ENCODE measurements at regions of chr11 and their contacts with region 1.

Region 1: GRCh38 chr11:85854557-85855340 is 434 bp upstream of the CCDC83 start:
- DNase-seq: peak; percentile 95
- H3K4me3 Mint-ChIP-seq: peak overlapping the region; percentile 86
- H3K27ac Mint-ChIP-seq: peak overlapping the region; percentile 89
- H3K4me1 Mint-ChIP-seq: peaks cover 15% of the 10 kb centered on the region
- H3K27me3 Mint-ChIP-seq: no peaks in the 10 kb centered on the region

Region 2: GRCh38 chr11:85647604-85648299 is 207.0 kb before region 1 on chr11 and contains the start of gene TMEM126A:
- CTCF ChIA-PET with region 1: interaction called, 6 read pairs
- POLR2A ChIA-PET with region 1: interaction called, 13 read pairs
- DNase-seq: peak; percentile 93
- H3K4me3 Mint-ChIP-seq: peak within 1 kb of the TSS; percentile 92
- H3K27ac Mint-ChIP-seq: peak within 1 kb of the TSS; percentile 91
- H3K4me1 Mint-ChIP-seq: peaks cover 36% of the 10 kb centered on the region
- H3K27me3 Mint-ChIP-seq: peaks cover 16% of the 10 kb centered on the region
- total RNA-seq, gene TMEM126A: 31.8 to 35.6 TPM

Region 3: GRCh38 chr11:85694386-85694980 is 160.3 kb before region 1 on chr11:
- CTCF ChIA-PET with region 1: interaction called, 16 read pairs
- POLR2A ChIA-PET with region 1: interaction called, 12 read pairs
- DNase-seq: no peak
- H3K4me3 Mint-ChIP-seq: no peak overlapping the region
- H3K27ac Mint-ChIP-seq: no peak overlapping the region
- H3K4me1 Mint-ChIP-seq: peaks cover 48% of the 10 kb centered on the region
- H3K27me3 Mint-ChIP-seq: no peaks in the 10 kb centered on the region

Region 4: DNA sequence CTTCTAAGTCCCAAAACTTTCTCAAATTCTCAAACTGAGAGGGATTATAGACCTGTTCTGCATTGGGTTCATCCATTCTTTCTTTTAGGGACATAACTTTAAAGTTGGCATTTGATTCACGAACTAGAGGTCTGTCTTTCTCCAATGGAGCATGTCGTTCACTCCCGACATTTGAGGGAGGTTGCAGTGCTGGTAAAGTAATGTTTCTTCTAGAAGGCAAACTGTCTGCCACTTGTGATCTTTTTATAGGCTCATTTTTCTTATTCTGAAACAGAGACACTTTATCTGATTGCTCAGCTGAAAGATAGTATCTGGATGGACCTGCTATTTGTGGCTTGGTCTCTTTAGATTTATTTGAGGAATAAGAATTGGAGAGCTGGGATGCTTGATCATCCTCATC is 128.4 kb before region 1 on chr11:
- CTCF ChIA-PET with region 1: no interaction called
- POLR2A ChIA-PET with region 1: no interaction called
- DNase-seq: no peak
- H3K4me3 Mint-ChIP-seq: no peak overlapping the region
- H3K27ac Mint-ChIP-seq: no peak overlapping the region
- H3K4me1 Mint-ChIP-seq: no peaks in the 10 kb centered on the region
- H3K27me3 Mint-ChIP-seq: no peaks in the 10 kb centered on the region

Region 5: DNA sequence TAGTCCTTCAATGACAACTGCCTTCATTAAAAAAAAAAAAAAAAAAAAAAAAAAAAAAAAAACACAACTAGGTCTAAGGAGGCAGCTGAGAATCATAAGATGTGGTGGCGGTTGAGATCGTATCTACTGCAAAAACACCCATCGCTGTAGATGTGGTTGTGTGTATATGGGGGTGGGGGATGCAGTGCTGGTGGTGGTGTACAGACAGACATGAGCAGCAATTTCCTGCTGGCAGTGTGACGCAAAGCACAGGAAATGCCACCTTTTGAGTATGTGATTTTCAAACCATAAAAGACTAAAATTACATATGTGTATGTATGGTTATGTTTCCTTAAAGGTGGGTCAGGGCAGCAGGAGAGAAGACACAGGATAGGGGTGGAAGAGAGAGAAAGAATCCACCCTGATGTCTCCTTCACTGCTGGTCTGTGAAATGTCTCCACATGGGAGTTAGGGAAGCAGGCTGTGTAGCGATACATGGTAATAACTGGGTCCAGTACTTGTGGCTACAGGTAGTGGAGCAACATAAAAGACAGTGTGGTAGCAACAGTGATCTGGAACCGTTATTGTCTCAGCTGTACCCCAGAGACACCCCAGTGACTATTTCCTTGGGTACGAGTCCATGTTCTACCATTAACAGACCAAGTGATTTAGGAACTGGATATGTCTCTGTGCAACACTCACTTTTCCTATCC is 101.7 kb before region 1 on chr11:
- CTCF ChIA-PET with region 1: interaction called, 13 read pairs
- POLR2A ChIA-PET with region 1: interaction called, 9 read pairs
- DNase-seq: peak; percentile 94
- H3K4me3 Mint-ChIP-seq: peak overlapping the region; percentile 58
- H3K27ac Mint-ChIP-seq: peak overlapping the region; percentile 94
- H3K4me1 Mint-ChIP-seq: peaks cover 96% of the 10 kb centered on the region
- H3K27me3 Mint-ChIP-seq: no peaks in the 10 kb centered on the region

Region 6: GRCh38 chr11:85826116-85826855 is 28.5 kb before region 1 on chr11:
- CTCF ChIA-PET with region 1: interaction called, 20 read pairs
- POLR2A ChIA-PET with region 1: interaction called, 9 read pairs
- DNase-seq: peak; percentile 31
- H3K4me3 Mint-ChIP-seq: no peak overlapping the region
- H3K27ac Mint-ChIP-seq: peak overlapping the region; percentile 41
- H3K4me1 Mint-ChIP-seq: peaks cover 72% of the 10 kb centered on the region
- H3K27me3 Mint-ChIP-seq: no peaks in the 10 kb centered on the region

Region 7: DNA sequence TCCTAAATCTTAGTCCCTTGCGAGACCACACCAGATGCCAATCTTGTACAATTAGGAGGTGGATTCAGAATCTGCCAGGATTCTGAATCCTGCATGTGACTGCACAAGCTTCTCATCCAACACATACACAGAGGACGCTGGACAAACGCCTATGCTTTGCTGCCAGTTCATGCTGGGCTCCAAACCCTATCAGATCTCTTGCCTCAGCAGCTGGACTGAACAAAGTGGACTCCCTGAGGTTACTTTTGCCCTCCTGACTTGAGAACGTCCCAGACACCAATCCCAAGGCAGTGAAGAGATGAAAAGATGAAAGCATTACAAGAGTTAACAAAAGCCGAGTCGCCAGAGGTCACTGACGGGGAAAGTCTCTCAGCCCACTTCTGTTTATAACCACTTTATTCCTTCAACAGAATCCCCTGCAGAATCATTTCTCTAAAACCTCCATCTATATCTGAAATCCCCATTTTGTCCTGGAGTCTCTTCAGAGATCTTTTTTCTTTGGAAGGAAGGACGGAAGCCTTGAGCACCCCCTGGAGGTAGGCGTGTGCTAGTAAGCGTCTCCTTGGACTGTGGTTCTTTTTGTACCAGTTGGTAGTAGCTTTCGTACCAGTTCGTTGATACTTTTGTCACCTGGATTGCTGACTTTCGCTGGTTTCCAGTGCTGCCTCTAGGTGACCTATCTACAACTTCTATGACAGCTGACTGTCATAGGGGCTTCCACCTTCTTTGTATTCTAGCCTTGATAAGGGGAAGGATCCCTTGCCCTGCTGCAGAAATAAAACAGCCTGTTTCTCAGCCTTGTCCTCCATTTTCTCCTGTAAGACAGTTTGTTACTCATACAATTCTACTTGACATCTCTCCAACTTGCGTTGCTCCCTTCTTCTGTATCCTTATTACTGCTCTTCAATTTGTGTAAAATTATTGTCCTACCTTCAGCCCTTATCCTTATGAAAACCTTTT is 363.7 kb after region 1 on chr11:
- CTCF ChIA-PET with region 1: interaction called, 19 read pairs
- POLR2A ChIA-PET with region 1: no interaction called
- DNase-seq: peak; percentile 73
- H3K4me3 Mint-ChIP-seq: peak overlapping the region; percentile 70
- H3K27ac Mint-ChIP-seq: peak overlapping the region; percentile 37
- H3K4me1 Mint-ChIP-seq: peaks cover 51% of the 10 kb centered on the region
- H3K27me3 Mint-ChIP-seq: no peaks in the 10 kb centered on the region

Region 8: DNA sequence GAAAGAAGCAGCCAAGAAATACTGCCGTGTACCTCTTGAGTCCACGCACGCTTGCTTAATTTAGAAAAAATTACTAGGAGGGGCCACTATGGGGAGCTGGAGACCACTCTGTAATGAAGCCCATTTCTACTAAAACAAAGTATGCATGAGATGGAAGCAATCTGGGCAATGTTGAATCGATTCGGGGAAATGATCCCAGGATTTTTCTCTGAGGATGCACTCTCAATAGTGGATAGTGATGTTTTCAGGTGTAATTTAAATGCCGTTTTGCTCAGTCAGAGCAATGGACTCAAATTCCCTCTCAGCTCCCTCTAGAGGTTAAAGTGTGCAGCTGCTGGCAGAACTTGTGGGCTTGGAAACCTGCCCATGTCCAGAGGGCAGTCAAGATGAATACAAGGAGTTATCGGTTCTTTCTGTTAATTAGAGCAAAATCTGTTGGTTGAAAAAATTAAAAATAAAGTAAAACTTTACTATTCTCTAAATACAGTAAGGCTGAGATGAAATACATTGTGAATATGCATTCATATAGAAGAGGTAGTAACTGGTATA is 753.6 kb after region 1 on chr11:
- CTCF ChIA-PET with region 1: interaction called, 10 read pairs
- POLR2A ChIA-PET with region 1: no interaction called
- DNase-seq: peak; percentile 43
- H3K4me3 Mint-ChIP-seq: no peak overlapping the region
- H3K27ac Mint-ChIP-seq: no peak overlapping the region
- H3K4me1 Mint-ChIP-seq: no peaks in the 10 kb centered on the region
- H3K27me3 Mint-ChIP-seq: peaks cover 17% of the 10 kb centered on the region